Activated CD4-positive, alpha-beta T cell treated with anti-CD3 and anti-CD28 coated beads, Interleukin-2, amount 10 ng/mL, durations not matched to agents 24 days and 14 days (primary cell): ENCODE measurements at regions of chr4 and their contacts with region 1.

Region 1: GRCh38 chr4:80202190-80202711 is 4.9 kb downstream of the PRDM8 start:
- DNase-seq: peak; percentile 95
- H3K4me3 Mint-ChIP-seq: peak overlapping the region; percentile 77
- H3K27ac Mint-ChIP-seq: peak overlapping the region; percentile 71
- H3K4me1 Mint-ChIP-seq: peaks cover 23% of the 10 kb centered on the region
- H3K27me3 Mint-ChIP-seq: peaks cover 40% of the 10 kb centered on the region

Region 2: GRCh38 chr4:79923281-79923680 is 279.0 kb before region 1 on chr4:
- intact Hi-C with region 1: no loop called
- DNase-seq: no peak
- H3K4me3 Mint-ChIP-seq: no peak overlapping the region
- H3K27ac Mint-ChIP-seq: no peak overlapping the region
- H3K4me1 Mint-ChIP-seq: peaks cover 8% of the 10 kb centered on the region
- H3K27me3 Mint-ChIP-seq: no peaks in the 10 kb centered on the region

Region 3: GRCh38 chr4:80007745-80008149 is 194.5 kb before region 1 on chr4:
- intact Hi-C with region 1: loop called (anchors 5 kb)
- DNase-seq: no peak
- H3K4me3 Mint-ChIP-seq: peak overlapping the region; percentile 51
- H3K27ac Mint-ChIP-seq: peak overlapping the region; percentile 85
- H3K4me1 Mint-ChIP-seq: peaks cover 53% of the 10 kb centered on the region
- H3K27me3 Mint-ChIP-seq: no peaks in the 10 kb centered on the region

Region 4: DNA sequence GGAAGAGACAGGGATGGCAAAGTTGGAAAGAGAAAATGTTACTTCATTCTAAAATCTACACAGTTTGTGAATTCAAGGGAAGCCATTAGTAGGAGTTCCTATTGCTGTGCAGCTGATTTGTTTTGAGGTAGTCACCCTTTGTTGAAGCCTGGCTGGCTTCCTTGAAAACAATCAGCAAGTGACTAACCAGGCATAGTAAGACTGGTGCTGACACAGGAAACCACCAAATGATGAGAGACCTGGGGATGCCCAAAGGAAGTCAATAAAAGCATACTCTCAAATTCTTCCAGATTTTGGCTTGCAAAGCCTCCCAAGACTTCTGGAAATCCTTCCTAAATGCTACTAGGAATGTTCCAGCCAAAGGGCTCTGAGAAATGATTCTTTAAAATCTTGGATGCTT is 28.9 kb before region 1 on chr4:
- intact Hi-C with region 1: loop called (anchors 1 kb)
- DNase-seq: peak; percentile 89
- H3K4me3 Mint-ChIP-seq: peak overlapping the region; percentile 68
- H3K27ac Mint-ChIP-seq: peak overlapping the region; percentile 95
- H3K4me1 Mint-ChIP-seq: peaks cover 50% of the 10 kb centered on the region
- H3K27me3 Mint-ChIP-seq: no peaks in the 10 kb centered on the region

Region 5: GRCh38 chr4:80215449-80216052 is 13.3 kb after region 1 on chr4:
- intact Hi-C with region 1: loop called (anchors 1 kb)
- DNase-seq: no peak
- H3K4me3 Mint-ChIP-seq: no peak overlapping the region
- H3K27ac Mint-ChIP-seq: no peak overlapping the region
- H3K4me1 Mint-ChIP-seq: peaks cover 2% of the 10 kb centered on the region
- H3K27me3 Mint-ChIP-seq: peaks cover 53% of the 10 kb centered on the region

Region 6: GRCh38 chr4:80266253-80266901 is 64.1 kb after region 1 on chr4 and contains the start of gene FGF5:
- intact Hi-C with region 1: loop called (anchors 5 kb)
- DNase-seq: peak; percentile 63
- H3K4me3 Mint-ChIP-seq: peak within 1 kb of the TSS; percentile 73
- H3K27ac Mint-ChIP-seq: peak within 1 kb of the TSS; percentile 21
- H3K4me1 Mint-ChIP-seq: peaks cover 12% of the 10 kb centered on the region
- H3K27me3 Mint-ChIP-seq: peaks cover 85% of the 10 kb centered on the region
- total RNA-seq, gene FGF5: not detected in 2 replicates

Region 7: GRCh38 chr4:80279751-80280150 is 77.5 kb after region 1 on chr4:
- intact Hi-C with region 1: no loop called
- DNase-seq: no peak
- H3K4me3 Mint-ChIP-seq: no peak overlapping the region
- H3K27ac Mint-ChIP-seq: no peak overlapping the region
- H3K4me1 Mint-ChIP-seq: no peaks in the 10 kb centered on the region
- H3K27me3 Mint-ChIP-seq: peaks cover 20% of the 10 kb centered on the region

Region 8: DNA sequence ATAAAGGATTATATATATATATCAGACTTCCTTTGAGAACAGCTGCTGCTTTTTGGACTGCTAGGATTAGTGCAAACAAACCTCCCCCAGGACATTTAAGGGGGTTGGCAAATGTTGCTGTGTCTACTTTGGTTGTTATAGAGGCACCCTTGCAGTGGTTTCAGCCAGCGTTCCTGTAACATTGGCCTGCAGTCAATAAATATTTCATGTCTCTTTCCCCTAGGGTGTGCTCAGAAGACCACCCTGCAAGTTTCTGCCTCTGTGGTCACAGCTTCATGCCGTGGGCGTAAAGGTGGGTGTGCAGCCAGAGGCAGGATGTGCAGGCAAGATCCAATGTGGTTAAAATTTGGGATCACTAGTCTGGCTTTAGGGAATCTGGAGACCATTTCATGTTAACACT is 93.1 kb after region 1 on chr4:
- intact Hi-C with region 1: no loop called
- DNase-seq: no peak
- H3K4me3 Mint-ChIP-seq: no peak overlapping the region
- H3K27ac Mint-ChIP-seq: no peak overlapping the region
- H3K4me1 Mint-ChIP-seq: no peaks in the 10 kb centered on the region
- H3K27me3 Mint-ChIP-seq: peaks cover 6% of the 10 kb centered on the region